Activated T-helper 1 cell treated with anti-CD3 and anti-CD28 coated beads, Interleukin-12 subunit alpha, Interleukin-12 subunit beta, Interleukin-2, Interleukin-4 antibody, amounts not matched to agents 30 ng/mL and 10 ng/mL and 1 ng/mL, durations not matched to agents 14 hours and 24 hours and 36 hours (primary cell): ENCODE measurements at regions of chr5 and their contacts with region 1.

Region 1: DNA sequence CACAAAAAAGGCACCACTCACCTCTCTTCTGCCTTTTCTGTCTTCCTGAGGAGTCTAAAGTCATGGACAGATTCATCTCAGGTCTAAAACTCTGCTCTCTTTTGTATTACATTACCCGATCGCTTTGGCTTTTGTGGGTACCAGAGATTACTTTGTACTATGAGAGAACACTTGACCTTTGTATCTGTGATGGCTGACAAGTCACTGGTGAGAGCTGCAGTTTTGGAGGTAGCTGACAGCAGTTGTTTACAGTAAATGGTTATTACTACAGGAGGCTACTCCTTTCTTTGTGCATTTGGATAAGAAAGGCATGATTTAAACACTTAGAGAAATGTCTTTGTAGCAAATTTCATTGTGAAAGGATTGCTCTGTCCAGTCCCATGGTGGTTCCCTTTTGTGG is 307.3 kb downstream of the FBXL17 start:
- DNase-seq: no peak
- H3K4me3 Mint-ChIP-seq: no peak overlapping the region
- H3K27ac Mint-ChIP-seq: no peak overlapping the region
- H3K4me1 Mint-ChIP-seq: no peaks in the 10 kb centered on the region
- H3K27me3 Mint-ChIP-seq: no peaks in the 10 kb centered on the region

Region 2: DNA sequence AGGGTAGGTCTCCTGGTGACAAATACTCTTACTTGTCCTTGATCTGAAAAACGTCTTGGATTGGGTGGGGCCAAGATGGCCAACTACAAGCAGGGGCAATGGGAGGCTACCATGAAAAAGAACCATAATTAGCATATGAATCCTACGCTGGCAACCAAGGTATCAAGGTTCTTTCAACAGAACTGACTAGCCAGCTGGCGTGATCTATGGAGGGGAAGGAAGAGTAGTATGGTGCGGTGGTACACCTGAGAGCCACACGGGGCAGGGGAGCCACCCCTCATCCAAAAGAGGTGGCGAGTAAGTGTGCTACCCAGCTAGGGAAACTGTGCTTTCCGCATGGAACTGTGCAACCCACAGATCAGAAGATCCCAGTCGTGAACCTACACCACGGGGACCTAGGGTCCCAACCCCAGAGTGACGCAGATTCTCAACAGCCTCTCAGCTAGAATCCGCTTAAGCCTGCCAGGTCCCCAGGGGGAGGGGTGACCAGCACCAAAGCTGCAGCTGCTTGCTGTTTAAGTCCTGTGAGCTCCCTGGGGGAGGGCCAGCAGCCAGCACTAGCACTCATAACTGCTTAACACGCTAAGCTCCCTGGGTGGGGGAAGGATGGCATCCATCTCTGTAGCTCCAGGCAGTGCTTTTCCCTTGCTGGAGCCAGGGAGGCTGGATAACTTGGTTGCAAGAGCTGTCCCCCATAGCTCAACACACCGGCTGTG is 27.5 kb before region 1 on chr5:
- intact Hi-C with region 1: loop called (anchors 1 kb)
- DNase-seq: no peak
- H3K4me3 Mint-ChIP-seq: no peak overlapping the region
- H3K27ac Mint-ChIP-seq: no peak overlapping the region
- H3K4me1 Mint-ChIP-seq: no peaks in the 10 kb centered on the region
- H3K27me3 Mint-ChIP-seq: no peaks in the 10 kb centered on the region